Left cardiac atrium (tissue), 4 donors: ENCODE measurements at regions of chr11 and their contacts with region 1.

Region 1: GRCh38 chr11:122781378-122782195 is 56.7 kb upstream of the CRTAM start:
- DNase-seq: peak; percentile 90
- ATAC-seq: peak; percentile 88 to 94

Region 2: DNA sequence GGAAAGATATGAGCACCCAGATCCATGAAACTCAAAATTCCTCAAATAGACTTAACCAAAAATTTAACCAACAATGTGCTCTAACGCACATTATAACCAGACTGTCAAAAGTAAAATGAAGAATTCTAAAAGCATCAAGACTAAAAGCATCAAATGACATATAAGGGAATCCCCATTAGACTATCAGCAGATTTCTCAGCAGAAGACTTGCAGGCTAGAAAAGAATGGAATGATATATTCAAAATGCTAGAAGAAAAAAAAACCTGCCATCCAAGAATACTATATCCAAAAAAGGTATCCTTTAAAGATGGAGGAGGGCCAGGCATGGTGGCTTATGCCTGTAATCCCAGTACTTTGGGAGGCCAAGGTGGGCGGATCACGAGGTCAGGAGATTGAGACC is 243.5 kb before region 1 on chr11:
- intact Hi-C with region 1: no loop called
- DNase-seq: no peak
- ATAC-seq: no peak

Region 3: DNA sequence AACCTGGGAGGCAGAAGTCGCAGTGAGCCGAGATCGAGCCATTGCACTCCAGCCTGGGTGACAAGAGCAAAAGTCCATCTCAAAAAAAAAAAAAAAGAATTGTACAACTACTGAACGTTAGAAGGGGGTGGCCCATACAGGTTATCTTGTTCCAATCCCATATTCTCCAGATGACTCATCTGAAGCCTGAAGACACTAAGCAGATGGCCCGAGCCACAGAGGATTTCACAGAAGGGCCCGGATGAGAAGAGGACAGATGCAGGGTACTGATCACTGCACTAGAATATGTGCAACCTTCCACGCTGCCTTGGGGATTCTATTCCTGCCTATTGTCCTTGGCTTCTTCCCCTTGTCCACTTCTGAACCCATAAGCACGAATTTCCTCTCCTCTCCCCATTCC is 196.9 kb before region 1 on chr11:
- intact Hi-C with region 1: loop called in 1 of 2 experiments (anchors 5 kb)
- DNase-seq: no peak
- ATAC-seq: no peak

Region 4: GRCh38 chr11:122628810-122629555 is 152.6 kb before region 1 on chr11:
- intact Hi-C with region 1: loop called in 1 of 2 experiments (anchors 2 kb)
- DNase-seq: peak; percentile 62
- ATAC-seq: peak; percentile 71 to 89

Region 5: GRCh38 chr11:122637541-122637940 is 144.0 kb before region 1 on chr11:
- intact Hi-C with region 1: loop called in 1 of 2 experiments (anchors 5 kb)
- DNase-seq: no peak
- ATAC-seq: no peak